ENCODE measurements at regions of chr5 and their contacts with region 1.

Region 1: GRCh38 chr5:132495667-132496190 is 5.2 kb upstream of the IRF1 start:
- DNase-seq: peak; percentile 85
- ATAC-seq: peak; percentile 81
- H3K4me3 ChIP-seq: peak overlapping the region; percentile 73 to 91 (median 88)
- H3K27ac ChIP-seq: peak overlapping the region; percentile 81
- H3K4me1 ChIP-seq: peaks cover 62% of the 10 kb centered on the region
- H3K27me3 ChIP-seq: no peaks in the 10 kb centered on the region
- CTCF ChIP-seq: peak; percentile 17; the same call in 1 of the 2 replicates
- EP300 ChIP-seq: peak; percentile 6 to 23; a peak in 1 of 4 replicates
- POLR2A ChIP-seq: peak in 1 of 2 experiments; percentile 68; a peak in 2 of 4 replicates
- RAD21 ChIP-seq: peak; percentile 26; the same call in 1 of the 2 replicates

Region 2: DNA sequence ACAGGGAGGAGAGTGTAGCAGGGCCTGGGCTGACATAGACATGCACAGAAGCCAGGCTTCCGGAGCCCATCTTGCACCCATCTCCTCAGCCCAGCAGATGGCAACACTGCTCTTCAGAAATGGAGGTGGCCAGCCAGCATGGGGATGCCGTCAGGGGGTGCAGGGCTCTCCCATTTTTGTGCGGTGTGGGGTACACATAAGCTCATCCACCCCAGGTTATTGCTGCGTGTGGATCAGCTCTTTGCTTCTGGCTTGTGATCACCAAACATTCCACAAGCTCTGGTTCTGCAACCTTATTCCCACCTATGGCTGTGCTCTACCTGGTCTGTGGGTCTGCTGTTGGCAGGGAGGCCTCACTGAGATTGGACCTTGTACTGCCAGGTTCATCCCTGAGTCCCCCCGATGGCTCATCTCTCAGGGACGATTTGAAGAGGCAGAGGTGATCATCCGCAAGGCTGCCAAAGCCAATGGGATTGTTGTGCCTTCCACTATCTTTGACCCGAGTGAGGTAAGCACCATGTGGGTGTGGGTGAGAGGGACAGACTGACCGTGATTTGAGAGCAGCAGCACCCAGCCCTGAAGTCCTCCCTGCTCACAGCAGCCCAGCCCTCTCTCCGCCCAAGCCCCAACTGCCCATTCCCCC is 109.0 kb before region 1 on chr5:
- CTCF ChIA-PET with region 1: interaction called, 54 read pairs
- POLR2A ChIA-PET with region 1: interaction called, 10 read pairs
- in situ Hi-C with region 1: loop called (anchors 10 kb)
- intact Hi-C with region 1: no loop called
- DNase-seq: peak; percentile 56
- ATAC-seq: peak; percentile 93
- H3K4me3 ChIP-seq: no peak overlapping the region
- H3K27ac ChIP-seq: no peak overlapping the region
- H3K4me1 ChIP-seq: peaks cover 44% of the 10 kb centered on the region
- H3K27me3 ChIP-seq: no peaks in the 10 kb centered on the region
- CTCF ChIP-seq: peak; percentile 97
- EP300 ChIP-seq: no peak
- POLR2A ChIP-seq: no peak
- RAD21 ChIP-seq: peak; percentile 95

Region 3: GRCh38 chr5:132426525-132427138 is 69.1 kb before region 1 on chr5:
- CTCF ChIA-PET with region 1: interaction called, 8 read pairs
- POLR2A ChIA-PET with region 1: interaction called, 86 read pairs
- in situ Hi-C with region 1: loop called (anchors 10 kb)
- intact Hi-C with region 1: loop called (anchors 2 kb)
- DNase-seq: peak; percentile 58
- ATAC-seq: peak; percentile 81
- H3K4me3 ChIP-seq: no peak overlapping the region
- H3K27ac ChIP-seq: no peak overlapping the region
- H3K4me1 ChIP-seq: peaks cover 76% of the 10 kb centered on the region
- H3K27me3 ChIP-seq: no peaks in the 10 kb centered on the region
- CTCF ChIP-seq: peak; percentile 71
- EP300 ChIP-seq: no peak
- POLR2A ChIP-seq: 0 out of 4 replicates have a peak, but pooled peaks of 1 of the 2 experiments have one; percentile 19
- RAD21 ChIP-seq: peak; percentile 67; the same call in 1 of the 2 replicates

Region 4: DNA sequence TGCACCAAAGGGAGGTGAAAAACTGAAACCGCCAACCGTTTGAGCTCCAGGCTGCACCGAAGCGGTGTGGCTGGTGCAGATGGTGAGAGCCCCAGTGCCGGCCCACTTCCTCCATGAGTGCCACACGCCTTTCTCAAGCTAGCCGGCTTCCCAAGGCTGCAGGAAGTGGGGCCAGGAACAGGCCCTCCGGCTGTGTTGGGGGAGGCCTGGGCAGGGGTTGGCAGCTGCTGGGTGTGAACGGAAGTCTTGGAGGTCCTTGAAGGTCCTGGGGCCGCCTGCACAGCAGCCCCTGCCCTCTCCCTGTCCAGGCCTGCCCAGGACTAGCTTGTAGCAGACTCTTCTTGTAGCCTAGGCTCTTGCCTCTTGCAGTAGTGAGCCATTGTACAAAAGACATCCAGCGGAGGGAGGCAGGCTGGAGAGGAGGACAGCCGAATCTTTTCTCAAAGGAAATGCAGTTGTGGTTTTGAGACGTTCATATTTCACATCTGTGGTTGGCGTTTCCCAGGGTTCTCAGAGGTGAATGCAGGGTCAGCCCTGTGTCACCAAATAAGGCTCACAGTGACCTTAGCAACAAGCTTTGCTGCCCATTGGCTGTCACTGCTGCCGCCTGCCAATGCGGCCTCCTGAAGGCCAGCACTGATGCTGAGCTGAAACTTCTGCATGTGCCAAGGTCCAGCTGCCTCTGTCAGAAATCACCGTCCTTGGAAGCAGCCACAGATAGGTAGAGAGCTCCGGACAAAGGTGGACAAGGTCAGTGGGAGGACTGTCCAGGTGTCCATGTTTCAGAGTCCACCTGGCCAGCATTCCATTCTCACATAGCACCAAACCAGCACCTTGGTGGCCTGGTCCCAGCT is 29.1 kb before region 1 on chr5:
- CTCF ChIA-PET with region 1: no interaction called
- POLR2A ChIA-PET with region 1: interaction called, 18 read pairs
- in situ Hi-C with region 1: no loop called
- intact Hi-C with region 1: loop called (anchors 5 kb)
- DNase-seq: peak; percentile 61
- ATAC-seq: peak; percentile 58
- H3K4me3 ChIP-seq: peak overlapping the region in 1 of 3 experiments; percentile 8; a peak in 1 of 6 replicates
- H3K27ac ChIP-seq: peak overlapping the region; percentile 46
- H3K4me1 ChIP-seq: peaks cover 92% of the 10 kb centered on the region
- H3K27me3 ChIP-seq: no peaks in the 10 kb centered on the region
- CTCF ChIP-seq: no peak
- EP300 ChIP-seq: no peak
- POLR2A ChIP-seq: no peak
- RAD21 ChIP-seq: no peak

Region 5: DNA sequence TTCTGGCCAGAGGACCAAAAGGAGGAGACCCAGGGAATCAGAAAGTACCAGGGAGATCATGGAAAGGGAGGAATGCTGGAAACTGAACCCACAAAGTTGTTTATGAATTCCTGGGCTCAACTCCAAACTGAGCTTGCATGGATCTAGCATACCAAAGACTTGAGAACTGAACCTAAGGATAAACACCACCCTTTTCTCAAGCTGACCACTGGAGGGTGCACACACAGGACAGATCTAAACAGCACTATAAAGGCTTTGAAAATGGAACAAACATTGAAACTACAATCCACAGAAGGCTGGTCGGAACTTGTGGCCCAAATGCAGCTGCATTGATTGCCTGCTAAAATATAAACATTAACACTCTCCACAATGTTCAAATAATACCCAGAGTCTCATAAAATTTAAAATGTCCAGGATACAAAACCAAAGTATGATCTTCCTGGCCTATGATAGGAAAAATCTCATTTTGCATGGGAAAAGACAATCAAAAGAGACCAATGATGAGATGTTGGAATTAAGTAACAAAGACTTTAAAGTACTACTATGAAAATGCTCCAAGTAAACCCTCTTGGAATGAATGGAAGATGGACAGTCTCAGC is 10.5 kb after region 1 on chr5:
- CTCF ChIA-PET with region 1: no interaction called
- POLR2A ChIA-PET with region 1: interaction called, 39 read pairs
- in situ Hi-C with region 1: no loop called
- intact Hi-C with region 1: no loop called
- DNase-seq: peak; percentile 41
- ATAC-seq: peak; percentile 67
- H3K4me3 ChIP-seq: no peak overlapping the region
- H3K27ac ChIP-seq: no peak overlapping the region
- H3K4me1 ChIP-seq: peaks cover 55% of the 10 kb centered on the region
- H3K27me3 ChIP-seq: no peaks in the 10 kb centered on the region
- CTCF ChIP-seq: peak; percentile 69
- EP300 ChIP-seq: no peak
- POLR2A ChIP-seq: no peak
- RAD21 ChIP-seq: no peak

Region 6: GRCh38 chr5:132704875-132705274 is 209.1 kb after region 1 on chr5:
- CTCF ChIA-PET with region 1: no interaction called
- POLR2A ChIA-PET with region 1: no interaction called
- in situ Hi-C with region 1: no loop called
- intact Hi-C with region 1: no loop called
- DNase-seq: no peak
- ATAC-seq: no peak
- H3K4me3 ChIP-seq: no peak overlapping the region
- H3K27ac ChIP-seq: no peak overlapping the region
- H3K4me1 ChIP-seq: no peaks in the 10 kb centered on the region
- H3K27me3 ChIP-seq: no peaks in the 10 kb centered on the region
- CTCF ChIP-seq: no peak
- EP300 ChIP-seq: no peak
- POLR2A ChIP-seq: no peak
- RAD21 ChIP-seq: no peak